ENCODE measurements at regions of chr13 and their contacts with region 1.

Region 1: GRCh38 chr13:42420304-42420703 is 148.4 kb downstream of the AKAP11 start:
- DNase-seq: peak; percentile 71
- H3K4me3 Mint-ChIP-seq: peak overlapping the region; percentile 10
- H3K27ac Mint-ChIP-seq: peak overlapping the region; percentile 66
- H3K4me1 Mint-ChIP-seq: peaks cover 39% of the 10 kb centered on the region
- H3K27me3 Mint-ChIP-seq: no peaks in the 10 kb centered on the region

Region 2: DNA sequence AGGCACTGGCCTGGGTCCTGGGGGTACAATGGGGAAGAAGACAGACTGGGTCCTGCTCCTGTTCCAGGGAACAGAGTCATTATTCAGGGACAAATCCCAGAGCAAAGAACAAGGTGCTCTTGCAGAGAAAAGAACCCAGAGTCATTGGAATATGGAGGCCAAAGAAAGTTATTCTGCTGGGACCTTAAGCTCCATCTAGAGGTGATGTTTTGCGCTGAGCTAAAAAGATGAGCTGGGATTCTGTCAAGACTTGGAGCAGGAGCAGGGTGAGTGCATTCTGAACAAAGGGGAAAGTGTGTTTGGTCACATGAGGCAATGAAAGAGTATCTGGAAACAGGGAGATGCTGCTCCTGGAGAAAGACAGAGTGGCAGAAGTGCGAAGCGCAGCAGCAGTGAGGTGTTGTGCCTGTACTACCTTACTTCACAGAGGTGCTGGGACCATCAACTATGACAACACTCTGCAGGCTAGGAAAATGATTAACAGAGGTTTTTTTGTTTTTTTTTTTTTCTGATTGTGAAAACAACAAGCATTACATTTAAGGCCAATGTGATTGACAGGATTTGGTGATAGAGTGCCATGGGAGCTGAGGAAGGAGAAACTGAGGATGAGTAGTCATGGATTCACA is 58.3 kb after region 1 on chr13:
- intact Hi-C with region 1: loop called (anchors 5 kb)
- DNase-seq: peak; percentile 67
- H3K4me3 Mint-ChIP-seq: no peak overlapping the region
- H3K27ac Mint-ChIP-seq: no peak overlapping the region
- H3K4me1 Mint-ChIP-seq: peaks cover 18% of the 10 kb centered on the region
- H3K27me3 Mint-ChIP-seq: no peaks in the 10 kb centered on the region

Region 3: GRCh38 chr13:42490676-42491075 is 70.4 kb after region 1 on chr13:
- intact Hi-C with region 1: no loop called
- DNase-seq: no peak
- H3K4me3 Mint-ChIP-seq: no peak overlapping the region
- H3K27ac Mint-ChIP-seq: no peak overlapping the region
- H3K4me1 Mint-ChIP-seq: peaks cover 25% of the 10 kb centered on the region
- H3K27me3 Mint-ChIP-seq: no peaks in the 10 kb centered on the region